Colonic mucosa (tissue), 4 donors: ENCODE measurements at regions of chr20 and their contacts with region 1.

Region 1: GRCh38 chr20:37534401-37535157 is 6.9 kb upstream of the BLCAP start:
- DNase-seq: peak; percentile 78
- H3K4me3 ChIP-seq: no peak overlapping the region
- H3K27ac ChIP-seq: no peak overlapping the region
- H3K4me1 ChIP-seq: peaks cover 9% of the 10 kb centered on the region
- H3K27me3 ChIP-seq: no peaks in the 10 kb centered on the region
- CTCF ChIP-seq: peak; percentile 85

Region 2: GRCh38 chr20:37192137-37192854 is 342.3 kb before region 1 on chr20:
- intact Hi-C with region 1: loop called (anchors 2 kb)
- DNase-seq: peak; percentile 89
- H3K4me3 ChIP-seq: no peak overlapping the region
- H3K27ac ChIP-seq: no peak overlapping the region
- H3K4me1 ChIP-seq: peaks cover 7% of the 10 kb centered on the region
- H3K27me3 ChIP-seq: no peaks in the 10 kb centered on the region
- CTCF ChIP-seq: peak; percentile 93

Region 3: GRCh38 chr20:37270576-37271420 is 263.8 kb before region 1 on chr20:
- intact Hi-C with region 1: loop called (anchors 5 kb)
- DNase-seq: no peak
- H3K4me3 ChIP-seq: no peak overlapping the region
- H3K27ac ChIP-seq: no peak overlapping the region
- H3K4me1 ChIP-seq: no peaks in the 10 kb centered on the region
- H3K27me3 ChIP-seq: no peaks in the 10 kb centered on the region
- CTCF ChIP-seq: no peak

Region 4: GRCh38 chr20:37384683-37385174 is 149.8 kb before region 1 on chr20:
- intact Hi-C with region 1: loop called (anchors 5 kb)
- DNase-seq: peak; percentile 55
- H3K4me3 ChIP-seq: peak overlapping the region; percentile 40
- H3K27ac ChIP-seq: no peak overlapping the region
- H3K4me1 ChIP-seq: peaks cover 5% of the 10 kb centered on the region
- H3K27me3 ChIP-seq: no peaks in the 10 kb centered on the region
- CTCF ChIP-seq: peak; percentile 92